Ascending aorta (tissue), 2 donors: ENCODE measurements at regions of chr19 and their contacts with region 1.

Region 1: GRCh38 chr19:3450796-3451411 is 29.4 kb downstream of the SMIM24 start:
- DNase-seq: peak; percentile 91 to 98
- H3K4me3 ChIP-seq: no peak overlapping the region
- H3K27ac ChIP-seq: peak overlapping the region; percentile 96 to 99
- H3K4me1 ChIP-seq: peaks cover 0 to 20% of the 10 kb centered on the region in 2 donors
- H3K27me3 ChIP-seq: no peaks in the 10 kb centered on the region
- CTCF ChIP-seq: no peak

Region 2: GRCh38 chr19:3365836-3366752 is 84.8 kb before region 1 on chr19 and contains the start of gene NFIC:
- intact Hi-C with region 1: loop called (anchors 5 kb)
- DNase-seq: peak in 1 of 2 donors; percentile 90
- H3K4me3 ChIP-seq: peak within 1 kb of the TSS; percentile 99
- H3K27ac ChIP-seq: peak within 1 kb of the TSS; percentile 100
- H3K4me1 ChIP-seq: peaks cover 18 to 37% of the 10 kb centered on the region in 2 donors
- H3K27me3 ChIP-seq: no peaks in the 10 kb centered on the region
- CTCF ChIP-seq: no peak
- total RNA-seq, gene NFIC: 194 TPM

Region 3: GRCh38 chr19:3434712-3435553 is 16.0 kb before region 1 on chr19:
- intact Hi-C with region 1: loop called (anchors 1 kb)
- DNase-seq: peak; percentile 80 to 97
- H3K4me3 ChIP-seq: peak overlapping the region; percentile 40 to 58
- H3K27ac ChIP-seq: peak overlapping the region; percentile 87 to 91
- H3K4me1 ChIP-seq: peaks cover 18 to 20% of the 10 kb centered on the region in 2 donors
- H3K27me3 ChIP-seq: no peaks in the 10 kb centered on the region
- CTCF ChIP-seq: no peak

Region 4: GRCh38 chr19:3466635-3467034 is 15.7 kb after region 1 on chr19:
- intact Hi-C with region 1: loop called (anchors 2 kb)
- DNase-seq: peak; percentile 53 to 89
- H3K4me3 ChIP-seq: peak overlapping the region in 1 of 2 donors; percentile 14
- H3K27ac ChIP-seq: peak overlapping the region; percentile 80 to 99
- H3K4me1 ChIP-seq: peaks cover 9 to 45% of the 10 kb centered on the region in 2 donors
- H3K27me3 ChIP-seq: no peaks in the 10 kb centered on the region
- CTCF ChIP-seq: no peak

Region 5: GRCh38 chr19:3573884-3574637 is 123.2 kb after region 1 on chr19:
- intact Hi-C with region 1: no loop called
- DNase-seq: peak; percentile 63 to 90
- H3K4me3 ChIP-seq: peak overlapping the region; percentile 89 to 92
- H3K27ac ChIP-seq: no peak overlapping the region
- H3K4me1 ChIP-seq: peaks cover 8 to 21% of the 10 kb centered on the region in 2 donors
- H3K27me3 ChIP-seq: no peaks in the 10 kb centered on the region
- CTCF ChIP-seq: no peak